IMR-90 (cell line): ENCODE measurements at regions of chr15 and their contacts with region 1.

Region 1: DNA sequence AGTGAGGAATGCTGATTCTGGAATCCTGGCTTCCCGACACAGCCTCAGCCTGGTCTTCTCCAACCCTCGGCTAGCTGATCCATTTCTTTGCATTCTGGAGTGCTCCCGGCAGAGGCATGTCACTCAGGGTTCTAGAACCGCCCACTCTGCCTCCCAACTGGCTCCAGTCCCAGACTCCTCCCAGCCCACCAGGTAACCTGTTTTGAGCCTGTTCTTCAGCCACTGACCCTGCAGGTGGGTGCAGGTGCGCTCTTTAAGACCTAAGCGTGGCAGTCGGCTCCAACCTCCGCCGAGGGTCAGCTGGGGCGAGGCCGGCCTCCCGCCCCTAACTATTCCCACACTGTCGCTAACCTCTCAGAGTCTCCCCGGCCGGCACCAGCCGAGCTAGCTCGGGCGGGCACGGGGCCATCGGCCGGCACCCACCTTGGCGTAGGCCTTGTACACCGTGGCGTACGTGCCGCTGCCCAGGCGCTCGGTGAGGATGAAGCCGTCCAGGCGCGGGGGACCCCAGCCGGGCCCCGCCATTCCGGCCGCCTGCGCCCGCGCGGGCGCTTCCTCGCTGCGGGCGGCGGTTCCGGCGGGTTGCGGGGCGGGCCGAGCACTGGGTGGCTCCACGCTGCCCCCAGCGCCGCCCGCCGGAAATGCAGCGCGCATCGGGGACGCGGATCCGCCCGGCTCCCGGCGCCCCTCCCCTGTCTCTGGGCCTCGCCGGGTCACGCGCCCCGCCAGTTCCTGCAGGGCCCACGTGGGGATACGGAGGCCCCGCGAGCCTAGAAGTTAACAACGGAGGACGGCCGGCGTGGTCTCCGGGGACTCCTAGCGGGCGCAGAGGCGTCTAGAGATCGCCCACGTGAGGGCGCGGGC is at the start of gene ULK3:
- DNase-seq: peak; percentile 73
- ATAC-seq: peak; percentile 98
- H3K4me3 ChIP-seq: peak within 1 kb of the TSS; percentile 91
- H3K27ac ChIP-seq: peak within 1 kb of the TSS; percentile 67
- H3K4me1 ChIP-seq: peaks cover 4% of the 10 kb centered on the region; the same call in 1 of the 2 replicates
- H3K27me3 ChIP-seq: no peaks in the 10 kb centered on the region
- CTCF ChIP-seq: peak; percentile 79
- POLR2A ChIP-seq: no peak
- RAD21 ChIP-seq: peak; percentile 41
- total RNA-seq, gene ULK3: 8.6 and 11.8 TPM in 2 replicates

Region 2: GRCh38 chr15:74664028-74664616 is 178.7 kb before region 1 on chr15:
- CTCF ChIA-PET with region 1: no interaction called
- POLR2A ChIA-PET with region 1: no interaction called
- dilution Hi-C with region 1: no loop called
- in situ Hi-C with region 1: no loop called
- intact Hi-C with region 1: no loop called
- DNase-seq: peak; percentile 75
- ATAC-seq: peak; percentile 99
- H3K4me3 ChIP-seq: no peak overlapping the region
- H3K27ac ChIP-seq: peak overlapping the region; percentile 39; the same call in 1 of the 2 replicates
- H3K4me1 ChIP-seq: peaks cover 6% of the 10 kb centered on the region
- H3K27me3 ChIP-seq: no peaks in the 10 kb centered on the region
- CTCF ChIP-seq: no peak
- POLR2A ChIP-seq: no peak
- RAD21 ChIP-seq: no peak

Region 3: GRCh38 chr15:74889883-74890664 is 47.3 kb after region 1 on chr15 and contains the start of gene MPI:
- CTCF ChIA-PET with region 1: no interaction called
- POLR2A ChIA-PET with region 1: interaction called, 8 read pairs
- dilution Hi-C with region 1: no loop called
- in situ Hi-C with region 1: no loop called
- intact Hi-C with region 1: loop called (anchors 5 kb)
- DNase-seq: peak; percentile 68
- ATAC-seq: peak; percentile 99
- H3K4me3 ChIP-seq: peak within 1 kb of the TSS; percentile 73
- H3K27ac ChIP-seq: peak within 1 kb of the TSS; percentile 84
- H3K4me1 ChIP-seq: peaks cover 9% of the 10 kb centered on the region
- H3K27me3 ChIP-seq: no peaks in the 10 kb centered on the region
- CTCF ChIP-seq: no peak
- POLR2A ChIP-seq: peak; percentile 83
- RAD21 ChIP-seq: no peak
- total RNA-seq, gene MPI: 61.4 and 91.8 TPM in 2 replicates